Stomach (tissue), 19 donors: ENCODE measurements at regions of chr4 and their contacts with region 1.

Region 1: DNA sequence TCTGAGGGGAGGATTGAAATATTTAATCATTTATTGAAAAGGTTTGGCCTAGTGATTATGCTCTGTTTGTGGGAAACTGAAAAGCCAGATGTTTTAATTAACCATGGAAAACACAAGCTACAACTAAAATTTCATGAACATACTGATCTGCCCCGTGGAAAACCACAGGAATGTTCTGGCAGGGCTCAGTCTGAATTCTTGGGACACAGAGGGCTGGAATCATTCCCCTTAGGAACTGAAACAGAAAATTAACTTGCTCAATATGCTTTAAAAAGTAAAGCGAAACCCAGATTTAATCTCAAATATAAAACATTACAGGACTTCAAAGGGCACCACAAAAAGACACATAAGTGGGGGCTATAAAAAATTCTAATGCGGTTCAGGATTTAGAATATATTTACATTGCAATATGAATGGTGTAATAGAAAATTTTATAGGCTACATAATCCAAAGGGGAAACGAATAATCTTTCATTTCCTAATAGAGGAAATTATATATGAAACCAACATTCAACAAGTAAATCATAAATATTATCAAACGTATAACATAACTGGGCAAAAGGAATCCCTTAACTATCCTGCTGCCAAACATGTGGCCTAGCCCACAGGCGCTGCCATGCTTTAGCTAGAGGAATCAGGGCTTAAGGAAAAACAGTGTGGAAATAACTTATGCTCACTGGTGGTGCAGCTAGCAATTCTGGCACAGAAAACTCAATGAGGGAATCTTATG is 70.9 kb downstream of the APBB2 start:
- DNase-seq: peak; percentile 62 to 79
- H3K4me3 ChIP-seq: no peak overlapping the region
- H3K27ac ChIP-seq: peak overlapping the region in 4 of 5 donors; percentile 74 to 85 (median 82)
- H3K4me1 ChIP-seq: peaks cover 57 to 76% (median 64%) of the 10 kb centered on the region in 4 donors
- H3K27me3 ChIP-seq: no peaks in the 10 kb centered on the region
- CTCF ChIP-seq: no peak
- EP300 ChIP-seq: no peak
- POLR2A ChIP-seq: no peak

Region 2: GRCh38 chr4:40845154-40845835 is 298.2 kb before region 1 on chr4:
- intact Hi-C with region 1: no loop called
- DNase-seq: no peak
- H3K4me3 ChIP-seq: no peak overlapping the region
- H3K27ac ChIP-seq: no peak overlapping the region
- H3K4me1 ChIP-seq: peaks cover 0 to 9% (median 0%) of the 10 kb centered on the region in 4 donors
- H3K27me3 ChIP-seq: no peaks in the 10 kb centered on the region
- CTCF ChIP-seq: no peak
- EP300 ChIP-seq: no peak
- POLR2A ChIP-seq: no peak

Region 3: GRCh38 chr4:41077628-41078027 is 65.8 kb before region 1 on chr4:
- intact Hi-C with region 1: no loop called
- DNase-seq: no peak
- H3K4me3 ChIP-seq: no peak overlapping the region
- H3K27ac ChIP-seq: no peak overlapping the region
- H3K4me1 ChIP-seq: peaks cover 0 to 24% (median 7%) of the 10 kb centered on the region in 4 donors
- H3K27me3 ChIP-seq: no peaks in the 10 kb centered on the region
- CTCF ChIP-seq: no peak
- EP300 ChIP-seq: no peak
- POLR2A ChIP-seq: no peak

Region 4: GRCh38 chr4:41204400-41204978 is 61.0 kb after region 1 on chr4:
- intact Hi-C with region 1: loop called (anchors 10 kb)
- DNase-seq: peak; percentile 48 to 52
- H3K4me3 ChIP-seq: no peak overlapping the region
- H3K27ac ChIP-seq: peak overlapping the region in 1 of 5 donors; percentile 15
- H3K4me1 ChIP-seq: peaks cover 11 to 64% (median 32%) of the 10 kb centered on the region in 4 donors
- H3K27me3 ChIP-seq: no peaks in the 10 kb centered on the region
- CTCF ChIP-seq: no peak
- EP300 ChIP-seq: no peak
- POLR2A ChIP-seq: no peak